ENCODE measurements at regions of chr6 and their contacts with region 1.

Region 1: DNA sequence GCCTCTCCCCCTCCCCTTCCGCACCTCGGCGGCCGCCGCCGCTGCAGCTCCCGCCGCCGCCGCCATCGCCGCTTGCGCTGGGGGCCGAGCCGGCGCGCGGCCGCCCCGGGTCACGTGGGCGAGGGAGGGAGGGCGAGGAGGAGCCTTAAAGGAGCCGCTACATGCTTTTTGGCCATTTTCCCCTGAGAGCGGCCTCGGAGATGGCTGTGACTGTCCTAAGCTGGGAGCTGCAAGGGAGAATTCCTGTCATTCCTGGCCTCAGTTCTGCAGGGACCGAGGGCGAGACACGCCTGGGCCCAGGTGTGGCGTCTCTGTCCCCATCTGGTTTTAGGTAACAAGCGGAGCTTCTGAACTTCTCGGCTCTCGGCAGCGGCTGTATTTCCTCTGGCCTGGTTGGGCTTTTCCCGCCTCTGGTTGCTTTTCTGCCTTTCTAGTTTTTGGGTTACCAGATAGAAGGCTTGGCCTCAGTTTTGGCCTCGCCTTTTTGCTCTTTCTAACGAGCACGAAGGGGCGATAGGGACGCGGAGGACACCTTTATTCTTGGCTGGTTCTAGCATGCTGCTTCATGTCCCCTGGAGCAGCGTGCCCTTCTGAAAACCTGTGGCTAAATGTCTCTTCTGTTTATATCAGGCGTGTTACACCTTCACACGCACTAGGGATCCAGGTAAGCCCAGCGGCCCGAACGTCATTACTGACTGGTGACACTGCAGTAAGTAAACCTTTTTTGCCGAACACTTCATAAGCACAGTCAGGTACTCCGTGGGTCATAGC is at the start of gene EHMT2:
- DNase-seq: peak; percentile 81 to 84
- H3K4me3 ChIP-seq: peak within 1 kb of the TSS; percentile 47 to 90 (median 57)
- H3K27ac ChIP-seq: peak within 1 kb of the TSS; percentile 68 to 95 (median 86)
- H3K4me1 ChIP-seq: peaks cover 19 to 20% of the 10 kb centered on the region in 2 donors
- H3K27me3 ChIP-seq: no peaks in the 10 kb centered on the region
- CTCF ChIP-seq: peak in 3 of 6 experiments; percentile 34 to 46 (median 44)
- POLR2A ChIP-seq: peak in 1 of 2 donors; percentile 84
- total RNA-seq, gene EHMT2: 26.9 to 47.7 (median 38.7) TPM

Region 2: DNA sequence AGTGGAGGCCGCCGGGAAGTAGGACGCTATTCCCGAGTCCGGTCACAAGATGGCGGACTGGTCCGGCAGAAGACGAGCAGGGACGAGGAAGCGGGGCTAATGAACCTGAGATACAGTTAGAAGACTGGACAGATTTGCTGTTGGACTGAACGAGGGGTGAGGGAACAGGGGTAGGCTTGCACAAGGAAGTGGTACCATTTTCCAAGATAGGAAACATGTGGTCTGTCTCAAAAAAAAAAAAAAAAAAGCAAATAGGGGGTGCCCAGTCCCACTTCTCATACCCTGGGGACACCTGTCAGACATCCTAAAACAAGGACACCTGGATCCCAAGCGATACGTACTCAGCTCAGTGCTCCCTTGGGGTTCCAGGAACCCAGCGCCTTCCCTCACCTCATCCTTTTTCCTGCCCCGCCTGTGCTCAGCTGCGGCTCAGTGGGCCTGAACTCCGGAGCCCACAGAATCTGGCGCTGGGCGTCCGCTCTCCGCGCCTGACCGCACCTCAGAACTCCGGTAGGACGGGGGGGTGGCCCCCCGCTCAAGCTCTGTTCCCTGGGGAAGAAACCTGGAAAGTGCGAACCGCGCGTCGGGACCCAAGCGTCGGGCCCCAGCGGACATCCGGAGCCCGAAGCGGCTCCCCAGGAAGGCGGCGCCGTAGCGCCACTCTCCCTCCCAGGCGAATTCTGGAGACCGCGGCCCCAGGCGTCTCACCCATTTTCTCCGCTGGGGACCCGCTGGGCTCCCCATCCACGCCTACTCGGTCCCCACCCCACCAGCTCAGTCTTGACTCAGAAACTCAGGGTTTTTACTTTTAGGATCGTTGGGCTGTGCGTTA is 216.7 kb before region 1 on chr6 and contains the start of gene LY6G5C:
- intact Hi-C with region 1: no loop called
- DNase-seq: peak; percentile 91 to 92
- H3K4me3 ChIP-seq: peak within 1 kb of the TSS in 2 of 3 donors; percentile 24 to 27
- H3K27ac ChIP-seq: peak within 1 kb of the TSS; percentile 79 to 84 (median 80)
- H3K4me1 ChIP-seq: peaks cover 10 to 18% of the 10 kb centered on the region in 2 donors
- H3K27me3 ChIP-seq: no peaks in the 10 kb centered on the region
- CTCF ChIP-seq: peak; percentile 25 to 89 (median 80)
- POLR2A ChIP-seq: peak in 1 of 2 donors; percentile 42
- total RNA-seq, gene LY6G5C: 0.54 to 7.9 (median 0.83) TPM in 3 of 4 donors, not detected in the other

Region 3: DNA sequence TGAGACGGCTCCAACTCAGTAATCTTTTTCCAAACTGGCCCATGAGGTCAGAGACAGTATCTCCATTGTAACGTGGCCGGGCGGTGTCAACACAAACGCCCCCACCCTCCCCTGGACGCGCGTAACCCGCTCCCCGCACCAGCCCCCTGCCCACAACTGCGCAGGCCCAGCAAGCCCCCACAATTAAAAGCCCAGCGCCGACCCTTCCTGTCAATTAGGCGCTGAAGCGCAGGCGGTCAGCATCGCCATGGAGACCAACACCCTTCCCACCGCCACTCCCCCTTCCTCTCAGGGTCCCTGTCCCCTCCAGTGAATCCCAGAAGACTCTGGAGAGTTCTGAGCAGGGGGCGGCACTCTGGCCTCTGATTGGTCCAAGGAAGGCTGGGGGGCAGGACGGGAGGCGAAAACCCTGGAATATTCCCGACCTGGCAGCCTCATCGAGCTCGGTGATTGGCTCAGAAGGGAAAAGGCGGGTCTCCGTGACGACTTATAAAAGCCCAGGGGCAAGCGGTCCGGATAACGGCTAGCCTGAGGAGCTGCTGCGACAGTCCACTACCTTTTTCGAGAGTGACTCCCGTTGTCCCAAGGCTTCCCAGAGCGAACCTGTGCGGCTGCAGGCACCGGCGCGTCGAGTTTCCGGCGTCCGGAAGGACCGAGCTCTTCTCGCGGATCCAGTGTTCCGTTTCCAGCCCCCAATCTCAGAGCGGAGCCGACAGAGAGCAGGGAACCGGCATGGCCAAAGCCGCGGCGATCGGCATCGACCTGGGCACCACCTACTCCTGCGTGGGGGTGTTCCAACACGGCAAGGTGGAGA is 82.6 kb before region 1 on chr6 and contains the starts of genes HSPA1A and HSPA1L:
- intact Hi-C with region 1: no loop called
- DNase-seq: peak; percentile 93
- H3K4me3 ChIP-seq: peak within 1 kb of the TSS in 2 of 3 donors; percentile 36 to 53
- H3K27ac ChIP-seq: peak within 1 kb of the TSS; percentile 100
- H3K4me1 ChIP-seq: peaks cover 21 to 35% of the 10 kb centered on the region in 2 donors
- H3K27me3 ChIP-seq: no peaks in the 10 kb centered on the region
- CTCF ChIP-seq: no peak
- POLR2A ChIP-seq: peak; percentile 99 to 100
- total RNA-seq, gene HSPA1A: 148 to 320 (median 190) TPM
- total RNA-seq, gene HSPA1L: 3.5 to 4.1 (median 3.9) TPM

Region 4: GRCh38 chr6:31862344-31863227 is 35.2 kb before region 1 on chr6 and contains the start of gene NEU1:
- intact Hi-C with region 1: loop called (anchors 5 kb)
- DNase-seq: peak; percentile 100
- H3K4me3 ChIP-seq: peak within 1 kb of the TSS; percentile 38 to 66 (median 65)
- H3K27ac ChIP-seq: peak within 1 kb of the TSS; percentile 55 to 90 (median 87)
- H3K4me1 ChIP-seq: peaks cover 17 to 22% of the 10 kb centered on the region in 2 donors
- H3K27me3 ChIP-seq: no peaks in the 10 kb centered on the region
- CTCF ChIP-seq: peak in 1 of 6 experiments; percentile 13
- POLR2A ChIP-seq: peak; percentile 64 to 98
- total RNA-seq, gene NEU1: 54.4 to 98.1 (median 65.9) TPM

Region 5: DNA sequence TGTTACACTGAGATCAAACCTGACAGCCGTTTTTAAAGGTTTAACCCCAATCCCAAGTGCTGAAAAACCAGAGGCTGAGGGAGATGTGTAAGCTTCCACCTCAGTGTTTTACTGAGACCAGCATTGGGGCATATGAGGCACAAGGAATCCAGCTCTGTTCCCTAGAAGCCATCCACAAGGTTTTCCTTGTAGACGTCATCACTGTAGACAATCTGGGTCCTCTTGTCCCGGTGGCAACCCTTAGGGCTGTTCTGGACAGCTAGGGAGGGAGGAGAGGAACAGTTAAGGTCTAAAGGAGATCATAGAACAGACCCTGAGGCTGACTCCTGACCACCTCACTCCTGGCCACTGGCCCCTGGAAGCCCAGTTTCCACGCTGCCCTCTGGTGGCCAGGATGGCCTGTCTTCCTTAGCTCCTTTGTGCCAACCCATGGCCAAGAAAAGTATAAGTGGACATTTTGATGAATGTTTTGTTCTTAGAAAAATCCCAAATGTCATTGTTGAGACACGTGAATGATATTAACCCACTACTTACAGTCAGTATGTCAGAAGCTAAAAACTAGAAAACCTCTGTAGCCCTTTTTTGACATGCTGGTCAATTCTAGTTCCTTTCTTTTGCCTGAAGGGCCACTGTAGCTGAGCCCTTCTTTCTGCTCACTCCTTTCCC is 54.5 kb after region 1 on chr6:
- intact Hi-C with region 1: loop called (anchors 5 kb)
- DNase-seq: peak; percentile 68 to 72
- H3K4me3 ChIP-seq: no peak overlapping the region
- H3K27ac ChIP-seq: no peak overlapping the region
- H3K4me1 ChIP-seq: no peaks in the 10 kb centered on the region
- H3K27me3 ChIP-seq: no peaks in the 10 kb centered on the region
- CTCF ChIP-seq: peak; percentile 43 to 66 (median 52)
- POLR2A ChIP-seq: no peak

Measured in thyroid gland (tissue), 4 donors.